ENCODE measurements at regions of chr1 and their contacts with region 1.

Region 1: DNA sequence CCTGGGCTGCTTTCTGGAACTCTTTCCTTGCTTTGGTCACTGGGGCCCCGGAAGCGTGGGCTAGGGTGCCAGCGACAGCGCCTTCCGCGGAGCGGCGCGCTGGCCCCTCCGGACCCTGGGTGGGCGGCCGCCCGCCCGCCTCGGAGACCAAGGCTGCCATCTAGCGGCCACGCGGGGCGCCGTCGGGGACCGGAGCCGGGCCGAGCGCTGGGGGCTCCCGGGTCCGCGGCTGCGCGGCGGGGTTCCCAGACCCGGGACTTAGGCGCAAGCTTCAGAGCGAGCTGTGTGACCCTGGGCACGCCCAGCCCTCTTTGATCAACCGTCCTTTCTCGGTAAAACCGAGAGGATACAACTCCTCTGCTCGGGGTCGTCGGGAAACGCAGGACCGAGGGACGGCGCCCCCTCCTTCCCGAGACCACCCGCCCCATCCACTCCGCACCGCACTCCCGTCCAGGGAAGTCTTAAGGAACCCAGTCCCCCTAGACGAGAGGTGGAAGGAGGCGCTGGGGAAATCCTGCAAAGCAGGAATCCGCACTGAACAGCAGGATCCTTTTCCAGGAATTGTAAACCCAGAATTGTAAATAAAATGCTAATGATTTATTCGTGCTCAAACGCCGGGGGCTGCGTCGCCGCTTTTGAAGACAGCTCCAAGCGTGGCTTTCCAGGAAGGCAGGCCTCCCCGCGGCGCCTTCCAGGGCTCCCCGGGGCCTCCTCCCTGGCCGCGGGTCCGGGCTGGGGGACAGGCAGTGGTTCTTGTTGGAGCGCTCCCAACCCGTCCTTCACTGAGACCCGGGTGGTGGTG is 41.2 kb downstream of the RRAGC start:
- DNase-seq: no peak
- ATAC-seq: peak; percentile 88
- H3K4me3 ChIP-seq: peak overlapping the region; percentile 19 to 64 (median 24); a peak in 5 of 6 replicates
- H3K27ac ChIP-seq: no peak overlapping the region
- H3K4me1 ChIP-seq: peaks cover 24% of the 10 kb centered on the region
- H3K27me3 ChIP-seq: peaks cover 2 to 67% of the 10 kb centered on the region in 2 experiments
- CTCF ChIP-seq: peak; percentile 71
- EP300 ChIP-seq: no peak
- POLR2A ChIP-seq: no peak
- RAD21 ChIP-seq: peak; percentile 85

Region 2: GRCh38 chr1:38044221-38045215 is 773.9 kb before region 1 on chr1:
- CTCF ChIA-PET with region 1: no interaction called
- POLR2A ChIA-PET with region 1: no interaction called
- in situ Hi-C with region 1: loop called (anchors 5 kb)
- intact Hi-C with region 1: no loop called
- DNase-seq: no peak
- ATAC-seq: no peak
- H3K4me3 ChIP-seq: no peak overlapping the region
- H3K27ac ChIP-seq: no peak overlapping the region
- H3K4me1 ChIP-seq: peaks cover 12% of the 10 kb centered on the region
- H3K27me3 ChIP-seq: peaks cover 15 to 79% of the 10 kb centered on the region in 2 experiments
- CTCF ChIP-seq: no peak
- EP300 ChIP-seq: no peak
- POLR2A ChIP-seq: no peak
- RAD21 ChIP-seq: no peak

Region 3: GRCh38 chr1:38246955-38247952 is 571.1 kb before region 1 on chr1:
- CTCF ChIA-PET with region 1: no interaction called
- POLR2A ChIA-PET with region 1: no interaction called
- in situ Hi-C with region 1: no loop called
- intact Hi-C with region 1: loop called (anchors 10 kb)
- DNase-seq: peak; percentile 46
- ATAC-seq: peak; percentile 66
- H3K4me3 ChIP-seq: peak overlapping the region in 2 of 3 experiments; percentile 18 to 46; a peak in 3 of 6 replicates
- H3K27ac ChIP-seq: no peak overlapping the region
- H3K4me1 ChIP-seq: peaks cover 23% of the 10 kb centered on the region
- H3K27me3 ChIP-seq: peaks cover 5 to 41% of the 10 kb centered on the region in 2 experiments; a peak in 4 of 5 replicates
- CTCF ChIP-seq: no peak
- EP300 ChIP-seq: no peak
- POLR2A ChIP-seq: no peak
- RAD21 ChIP-seq: no peak

Region 4: GRCh38 chr1:38608202-38608864 is 210.0 kb before region 1 on chr1:
- CTCF ChIA-PET with region 1: interaction called, 5 read pairs
- POLR2A ChIA-PET with region 1: no interaction called
- in situ Hi-C with region 1: loop called (anchors 5 kb)
- intact Hi-C with region 1: no loop called
- DNase-seq: peak; percentile 12
- ATAC-seq: peak; percentile 80
- H3K4me3 ChIP-seq: no peak overlapping the region
- H3K27ac ChIP-seq: no peak overlapping the region
- H3K4me1 ChIP-seq: peaks cover 6% of the 10 kb centered on the region; the same call in 1 of the 2 replicates
- H3K27me3 ChIP-seq: no peaks in the 10 kb centered on the region
- CTCF ChIP-seq: peak; percentile 78
- EP300 ChIP-seq: no peak
- POLR2A ChIP-seq: no peak
- RAD21 ChIP-seq: no peak

Region 5: GRCh38 chr1:38804062-38804886 is 14.1 kb before region 1 on chr1:
- CTCF ChIA-PET with region 1: no interaction called
- POLR2A ChIA-PET with region 1: no interaction called
- in situ Hi-C with region 1: no loop called
- intact Hi-C with region 1: no loop called
- DNase-seq: no peak
- ATAC-seq: peak; percentile 72
- H3K4me3 ChIP-seq: peak overlapping the region in 2 of 3 experiments; percentile 16 to 33; a peak in 1 of 6 replicates
- H3K27ac ChIP-seq: no peak overlapping the region
- H3K4me1 ChIP-seq: peaks cover 7% of the 10 kb centered on the region; the same call in 1 of the 2 replicates
- H3K27me3 ChIP-seq: peaks cover 6 to 47% of the 10 kb centered on the region in 2 experiments
- CTCF ChIP-seq: no peak
- EP300 ChIP-seq: no peak
- POLR2A ChIP-seq: no peak
- RAD21 ChIP-seq: no peak